AG04449 (cell line): ENCODE measurements at regions of chr19 and their contacts with region 1.

Region 1: DNA sequence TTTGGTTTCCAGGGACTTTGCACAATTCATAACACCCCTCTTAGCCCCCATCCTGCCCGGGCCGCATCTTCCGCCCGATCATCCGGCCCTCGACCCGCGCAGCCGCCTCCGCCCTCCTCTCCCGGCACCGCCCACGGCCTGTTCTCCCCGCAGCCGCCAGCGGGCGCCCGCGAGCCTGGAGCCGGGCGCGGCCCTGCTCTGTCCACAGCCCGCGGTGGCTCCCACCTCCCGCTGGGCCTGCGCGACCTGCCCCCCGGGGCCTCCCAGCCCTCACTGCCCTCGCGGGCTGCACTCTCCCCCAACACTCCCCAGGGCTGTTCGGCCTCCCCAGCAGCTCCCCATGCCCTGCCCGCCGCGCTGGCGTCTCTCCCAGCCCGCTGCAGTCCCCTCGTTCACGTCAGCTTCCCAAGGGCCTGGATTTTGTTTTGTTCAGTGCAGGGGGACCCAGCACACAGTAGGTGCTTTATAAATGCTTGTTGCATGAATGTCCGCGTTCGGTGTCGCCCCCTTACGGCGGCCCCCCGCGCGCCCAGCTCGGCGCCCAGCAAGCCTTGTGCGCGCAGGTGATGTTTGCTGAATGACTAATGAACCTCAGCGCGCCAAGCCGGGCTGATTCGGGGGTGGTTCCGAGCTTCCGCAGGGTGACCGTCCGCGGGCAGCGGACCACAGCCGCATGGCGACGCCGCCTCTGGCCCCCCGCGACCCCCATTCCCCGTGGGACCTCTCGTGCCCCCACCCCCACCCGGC is 4.6 kb upstream of the APC2 start:
- DNase-seq: no peak
- H3K4me3 ChIP-seq: peak overlapping the region; percentile 52
- CTCF ChIP-seq: peak; percentile 87

Region 2: GRCh38 chr19:1455336-1456120 is 10.2 kb after region 1 on chr19:
- CTCF ChIA-PET with region 1: interaction called, 25 read pairs
- POLR2A ChIA-PET with region 1: interaction called, 3 read pairs
- DNase-seq: no peak
- H3K4me3 ChIP-seq: no peak overlapping the region
- CTCF ChIP-seq: no peak